IMR-90 (cell line): ENCODE measurements at regions of chr10 and their contacts with region 1.

Region 1: DNA sequence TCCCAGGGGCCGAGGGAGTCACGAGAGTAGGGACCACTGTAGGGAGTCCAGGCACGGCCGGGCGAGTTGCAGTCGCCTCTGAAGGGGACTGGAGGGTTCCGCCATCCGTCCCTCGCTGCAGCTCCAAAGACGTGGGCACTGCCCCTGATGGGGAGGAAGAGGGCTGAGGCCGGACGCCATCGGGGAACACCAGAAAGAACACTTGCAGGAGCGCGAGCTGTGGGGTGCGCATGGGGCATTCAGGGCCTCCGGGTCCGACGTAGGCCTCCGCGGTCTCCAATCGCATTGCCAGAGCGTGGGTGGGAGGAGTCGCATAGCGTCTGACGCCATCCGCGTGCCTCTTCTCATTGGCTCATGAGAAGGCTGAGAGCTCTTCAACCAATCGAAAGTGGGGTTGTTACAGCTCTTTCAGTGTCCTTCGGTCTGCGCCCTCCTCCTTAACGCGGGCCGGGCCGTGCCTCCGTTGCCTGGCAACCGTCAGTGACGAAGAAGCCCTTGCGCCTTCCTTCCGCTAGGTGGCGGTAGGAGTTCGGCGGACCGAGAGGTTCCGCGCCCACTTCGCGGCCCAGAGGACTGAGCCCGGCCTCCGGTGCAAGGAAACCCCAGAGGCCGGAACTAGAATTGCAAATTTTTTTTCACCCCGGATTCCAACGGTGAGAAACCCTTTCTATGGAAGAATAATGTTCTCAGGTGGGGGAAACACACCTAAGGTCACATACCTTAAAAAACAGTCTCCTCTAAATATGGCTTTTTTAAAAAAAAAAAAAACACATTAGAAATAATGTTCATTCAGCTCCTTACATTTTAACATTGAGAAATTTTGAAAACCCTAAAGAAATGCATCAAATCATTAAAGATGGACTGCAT is at the start of gene TCTN3:
- DNase-seq: peak; percentile 100
- ATAC-seq: peak; percentile 99
- H3K4me3 ChIP-seq: peak within 1 kb of the TSS; percentile 64
- H3K27ac ChIP-seq: peak within 1 kb of the TSS; percentile 36
- H3K4me1 ChIP-seq: no peaks in the 10 kb centered on the region
- H3K27me3 ChIP-seq: no peaks in the 10 kb centered on the region
- CTCF ChIP-seq: peak; percentile 100; the same call in 1 of the 2 replicates
- POLR2A ChIP-seq: peak; percentile 72
- RAD21 ChIP-seq: peak; percentile 98
- total RNA-seq, gene TCTN3: 20.6 and 26.9 TPM in 2 replicates

Region 2: GRCh38 chr10:95561182-95562075 is 132.5 kb before region 1 on chr10 and contains the start of gene SORBS1:
- CTCF ChIA-PET with region 1: no interaction called
- POLR2A ChIA-PET with region 1: no interaction called
- dilution Hi-C with region 1: no loop called
- in situ Hi-C with region 1: no loop called
- intact Hi-C with region 1: loop called (anchors 2 kb)
- DNase-seq: peak; percentile 91
- ATAC-seq: peak; percentile 100
- H3K4me3 ChIP-seq: peak within 1 kb of the TSS; percentile 68
- H3K27ac ChIP-seq: no peak within 1 kb of the TSS
- H3K4me1 ChIP-seq: no peaks in the 10 kb centered on the region
- H3K27me3 ChIP-seq: peaks cover 27% of the 10 kb centered on the region
- CTCF ChIP-seq: no peak
- POLR2A ChIP-seq: peak; percentile 55; the same call in 1 of the 2 replicates
- RAD21 ChIP-seq: no peak
- total RNA-seq, gene SORBS1: under 0.01 and 0.18 TPM in 2 replicates

Region 3: DNA sequence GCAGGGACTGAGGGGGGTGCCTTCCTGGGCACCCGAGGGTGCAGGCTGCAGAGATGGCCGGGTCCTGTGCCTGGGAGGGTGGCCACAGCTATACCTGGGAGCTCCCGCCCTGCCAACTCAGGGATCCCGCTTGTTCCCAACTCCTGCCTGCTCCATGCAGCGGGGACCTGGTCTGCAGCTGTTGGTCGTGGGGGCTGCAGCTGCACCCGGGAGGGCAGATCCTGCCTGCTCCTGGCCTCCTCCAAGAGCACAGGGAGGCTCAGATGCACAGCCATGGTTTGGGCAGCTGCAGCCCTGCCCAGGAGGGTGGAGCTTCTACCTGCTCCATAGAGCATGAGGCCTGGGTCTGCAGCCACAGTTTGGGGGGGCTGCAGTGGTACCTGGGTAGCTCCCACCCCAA is 13.1 kb after region 1 on chr10:
- CTCF ChIA-PET with region 1: interaction called, 16 read pairs
- POLR2A ChIA-PET with region 1: no interaction called
- dilution Hi-C with region 1: no loop called
- in situ Hi-C with region 1: no loop called
- intact Hi-C with region 1: no loop called
- DNase-seq: no peak
- ATAC-seq: no peak
- H3K4me3 ChIP-seq: no peak overlapping the region
- H3K27ac ChIP-seq: no peak overlapping the region
- H3K4me1 ChIP-seq: peaks cover 2% of the 10 kb centered on the region; the same call in 1 of the 2 replicates
- H3K27me3 ChIP-seq: no peaks in the 10 kb centered on the region
- CTCF ChIP-seq: no peak
- POLR2A ChIP-seq: no peak
- RAD21 ChIP-seq: no peak

Region 4: GRCh38 chr10:95818668-95819067 is 124.8 kb after region 1 on chr10:
- CTCF ChIA-PET with region 1: interaction called, 18 read pairs
- POLR2A ChIA-PET with region 1: no interaction called
- dilution Hi-C with region 1: no loop called
- in situ Hi-C with region 1: no loop called
- intact Hi-C with region 1: no loop called
- DNase-seq: peak; percentile 82
- ATAC-seq: peak; percentile 78
- H3K4me3 ChIP-seq: no peak overlapping the region
- H3K27ac ChIP-seq: peak overlapping the region; percentile 50; the same call in 1 of the 2 replicates
- H3K4me1 ChIP-seq: peaks cover 16% of the 10 kb centered on the region
- H3K27me3 ChIP-seq: no peaks in the 10 kb centered on the region
- CTCF ChIP-seq: no peak
- POLR2A ChIP-seq: no peak
- RAD21 ChIP-seq: no peak

Region 5: GRCh38 chr10:95872158-95872711 is 178.3 kb after region 1 on chr10:
- CTCF ChIA-PET with region 1: interaction called, 12 read pairs
- POLR2A ChIA-PET with region 1: no interaction called
- dilution Hi-C with region 1: no loop called
- in situ Hi-C with region 1: no loop called
- intact Hi-C with region 1: no loop called
- DNase-seq: no peak
- ATAC-seq: no peak
- H3K4me3 ChIP-seq: no peak overlapping the region
- H3K27ac ChIP-seq: no peak overlapping the region
- H3K4me1 ChIP-seq: no peaks in the 10 kb centered on the region
- H3K27me3 ChIP-seq: no peaks in the 10 kb centered on the region
- CTCF ChIP-seq: no peak
- POLR2A ChIP-seq: no peak
- RAD21 ChIP-seq: no peak

Region 6: GRCh38 chr10:96292971-96293920 is 599.3 kb after region 1 on chr10:
- CTCF ChIA-PET with region 1: no interaction called
- POLR2A ChIA-PET with region 1: no interaction called
- dilution Hi-C with region 1: no loop called
- in situ Hi-C with region 1: no loop called
- intact Hi-C with region 1: loop called (anchors 10 kb)
- DNase-seq: peak; percentile 46
- ATAC-seq: peak; percentile 89
- H3K4me3 ChIP-seq: no peak overlapping the region
- H3K27ac ChIP-seq: no peak overlapping the region
- H3K4me1 ChIP-seq: no peaks in the 10 kb centered on the region
- H3K27me3 ChIP-seq: no peaks in the 10 kb centered on the region
- CTCF ChIP-seq: peak; percentile 53
- POLR2A ChIP-seq: no peak
- RAD21 ChIP-seq: peak; percentile 58